ENCODE measurements at regions of chr11 and their contacts with region 1.

Region 1: GRCh38 chr11:62787005-62787759 is at the start of gene TMEM179B:
- DNase-seq: peak; percentile 99
- H3K4me3 Mint-ChIP-seq: peak within 1 kb of the TSS; percentile 96
- H3K27ac Mint-ChIP-seq: peak within 1 kb of the TSS; percentile 98
- H3K4me1 Mint-ChIP-seq: peaks cover 50% of the 10 kb centered on the region
- H3K27me3 Mint-ChIP-seq: no peaks in the 10 kb centered on the region

Region 2: DNA sequence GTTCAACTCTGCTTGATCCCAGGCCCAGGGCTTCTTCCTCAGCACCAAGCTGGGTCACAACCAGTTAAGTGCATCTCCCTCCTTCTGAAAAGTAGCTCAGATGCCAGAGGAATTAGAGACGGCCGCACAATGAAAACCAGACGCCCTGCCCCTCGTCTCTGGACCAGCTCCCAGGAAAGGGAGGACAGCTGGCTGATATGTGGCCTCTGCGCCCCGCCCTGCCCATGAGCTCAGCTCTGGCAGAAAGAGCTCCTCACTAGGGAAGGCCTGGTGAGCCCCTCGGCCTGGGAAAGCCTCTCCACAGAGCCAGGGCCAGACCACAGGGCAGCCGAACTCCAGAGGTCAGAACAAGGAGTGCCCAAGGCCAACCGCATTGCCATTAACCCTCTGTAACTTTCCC is 386.4 kb before region 1 on chr11:
- CTCF ChIA-PET with region 1: no interaction called
- DNase-seq: no peak
- H3K4me3 Mint-ChIP-seq: no peak overlapping the region
- H3K27ac Mint-ChIP-seq: no peak overlapping the region
- H3K4me1 Mint-ChIP-seq: peaks cover 56% of the 10 kb centered on the region
- H3K27me3 Mint-ChIP-seq: peaks cover 8% of the 10 kb centered on the region

Region 3: GRCh38 chr11:62753736-62754603 is 33.2 kb before region 1 on chr11 and contains the start of gene ZBTB3:
- CTCF ChIA-PET with region 1: interaction called, 11 read pairs
- DNase-seq: peak; percentile 98
- H3K4me3 Mint-ChIP-seq: peak within 1 kb of the TSS; percentile 87
- H3K27ac Mint-ChIP-seq: peak within 1 kb of the TSS; percentile 94
- H3K4me1 Mint-ChIP-seq: peaks cover 35% of the 10 kb centered on the region
- H3K27me3 Mint-ChIP-seq: peaks cover 8% of the 10 kb centered on the region

Region 4: GRCh38 chr11:62799486-62799885 is 12.3 kb after region 1 on chr11:
- CTCF ChIA-PET with region 1: interaction called, 10 read pairs
- DNase-seq: no peak
- H3K4me3 Mint-ChIP-seq: no peak overlapping the region
- H3K27ac Mint-ChIP-seq: peak overlapping the region; percentile 24
- H3K4me1 Mint-ChIP-seq: peaks cover 15% of the 10 kb centered on the region
- H3K27me3 Mint-ChIP-seq: no peaks in the 10 kb centered on the region

Region 5: DNA sequence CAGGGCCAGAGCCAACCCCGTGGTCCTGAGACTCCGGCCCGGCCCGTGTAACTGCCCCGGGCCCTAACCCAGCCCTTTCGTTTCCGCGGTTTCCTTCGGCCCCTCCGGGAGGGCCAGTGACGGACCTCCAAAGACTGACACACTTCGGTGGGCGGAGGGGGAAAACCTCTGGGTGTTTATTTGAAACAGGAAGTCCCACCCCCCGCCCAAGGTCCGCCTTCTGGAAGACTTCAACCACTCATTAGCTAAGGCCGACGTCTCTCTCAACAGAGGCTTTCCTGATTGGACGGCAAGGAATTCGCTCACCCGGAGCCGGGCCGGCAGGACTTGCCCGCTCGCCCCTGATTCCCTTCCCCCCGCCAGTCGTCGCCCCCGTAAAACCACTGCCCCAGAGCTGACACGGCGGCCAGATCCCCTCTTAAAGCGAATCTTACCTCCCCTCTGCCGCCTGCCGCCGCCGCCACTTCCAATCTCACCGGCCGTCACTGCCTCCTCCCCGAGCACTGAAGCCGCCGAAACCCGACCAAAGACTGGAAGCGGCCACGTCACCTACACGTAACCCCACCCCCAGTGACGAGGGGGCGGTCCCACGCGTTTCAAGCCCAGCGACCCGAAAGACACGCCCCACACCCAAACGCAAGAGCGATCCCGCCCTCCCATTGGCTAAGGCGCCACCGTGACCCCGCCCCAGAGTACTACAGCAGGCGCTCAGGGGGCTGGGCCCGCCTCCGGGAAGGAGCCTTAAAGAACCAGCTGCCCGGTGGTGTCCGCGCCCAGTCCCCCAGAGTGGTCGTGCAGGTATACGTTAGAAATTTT is 44.5 kb after region 1 on chr11 and contains the start of gene STX5:
- CTCF ChIA-PET with region 1: interaction called, 18 read pairs
- DNase-seq: peak; percentile 100
- H3K4me3 Mint-ChIP-seq: peak within 1 kb of the TSS; percentile 90
- H3K27ac Mint-ChIP-seq: peak within 1 kb of the TSS; percentile 98
- H3K4me1 Mint-ChIP-seq: peaks cover 45% of the 10 kb centered on the region
- H3K27me3 Mint-ChIP-seq: no peaks in the 10 kb centered on the region

Region 6: DNA sequence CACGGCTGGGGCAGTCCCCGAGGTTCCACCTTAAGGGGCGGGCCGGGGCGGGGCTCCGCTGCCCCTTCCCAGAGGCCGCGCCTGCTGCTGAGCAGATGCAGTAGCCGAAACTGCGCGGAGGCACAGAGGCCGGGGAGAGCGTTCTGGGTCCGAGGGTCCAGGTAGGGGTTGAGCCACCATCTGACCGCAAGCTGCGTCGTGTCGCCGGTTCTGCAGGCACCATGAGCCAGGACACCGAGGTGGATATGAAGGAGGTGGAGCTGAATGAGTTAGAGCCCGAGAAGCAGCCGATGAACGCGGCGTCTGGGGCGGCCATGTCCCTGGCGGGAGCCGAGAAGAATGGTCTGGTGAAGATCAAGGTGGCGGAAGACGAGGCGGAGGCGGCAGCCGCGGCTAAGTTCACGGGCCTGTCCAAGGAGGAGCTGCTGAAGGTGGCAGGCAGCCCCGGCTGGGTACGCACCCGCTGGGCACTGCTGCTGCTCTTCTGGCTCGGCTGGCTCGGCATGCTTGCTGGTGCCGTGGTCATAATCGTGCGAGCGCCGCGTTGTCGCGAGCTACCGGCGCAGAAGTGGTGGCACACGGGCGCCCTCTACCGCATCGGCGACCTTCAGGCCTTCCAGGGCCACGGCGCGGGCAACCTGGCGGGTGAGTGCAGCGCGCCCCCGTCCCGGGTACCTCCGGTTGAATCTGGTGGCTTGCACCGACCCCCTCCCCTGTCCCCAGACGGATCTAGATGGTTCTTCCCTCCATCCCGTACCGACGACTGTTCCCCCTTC is 93.8 kb after region 1 on chr11 and contains the start of gene SLC3A2:
- CTCF ChIA-PET with region 1: interaction called, 32 read pairs
- DNase-seq: peak; percentile 92
- H3K4me3 Mint-ChIP-seq: peak within 1 kb of the TSS; percentile 97
- H3K27ac Mint-ChIP-seq: peak within 1 kb of the TSS; percentile 100
- H3K4me1 Mint-ChIP-seq: peaks cover 52% of the 10 kb centered on the region
- H3K27me3 Mint-ChIP-seq: peaks cover 4% of the 10 kb centered on the region

Region 7: GRCh38 chr11:62892077-62892922 is 105.1 kb after region 1 on chr11:
- CTCF ChIA-PET with region 1: no interaction called
- DNase-seq: no peak
- H3K4me3 Mint-ChIP-seq: no peak overlapping the region
- H3K27ac Mint-ChIP-seq: no peak overlapping the region
- H3K4me1 Mint-ChIP-seq: peaks cover 3% of the 10 kb centered on the region
- H3K27me3 Mint-ChIP-seq: peaks cover 29% of the 10 kb centered on the region